Psoas muscle (tissue), 8 donors: ENCODE measurements at regions of chr1 and their contacts with region 1.

Region 1: DNA sequence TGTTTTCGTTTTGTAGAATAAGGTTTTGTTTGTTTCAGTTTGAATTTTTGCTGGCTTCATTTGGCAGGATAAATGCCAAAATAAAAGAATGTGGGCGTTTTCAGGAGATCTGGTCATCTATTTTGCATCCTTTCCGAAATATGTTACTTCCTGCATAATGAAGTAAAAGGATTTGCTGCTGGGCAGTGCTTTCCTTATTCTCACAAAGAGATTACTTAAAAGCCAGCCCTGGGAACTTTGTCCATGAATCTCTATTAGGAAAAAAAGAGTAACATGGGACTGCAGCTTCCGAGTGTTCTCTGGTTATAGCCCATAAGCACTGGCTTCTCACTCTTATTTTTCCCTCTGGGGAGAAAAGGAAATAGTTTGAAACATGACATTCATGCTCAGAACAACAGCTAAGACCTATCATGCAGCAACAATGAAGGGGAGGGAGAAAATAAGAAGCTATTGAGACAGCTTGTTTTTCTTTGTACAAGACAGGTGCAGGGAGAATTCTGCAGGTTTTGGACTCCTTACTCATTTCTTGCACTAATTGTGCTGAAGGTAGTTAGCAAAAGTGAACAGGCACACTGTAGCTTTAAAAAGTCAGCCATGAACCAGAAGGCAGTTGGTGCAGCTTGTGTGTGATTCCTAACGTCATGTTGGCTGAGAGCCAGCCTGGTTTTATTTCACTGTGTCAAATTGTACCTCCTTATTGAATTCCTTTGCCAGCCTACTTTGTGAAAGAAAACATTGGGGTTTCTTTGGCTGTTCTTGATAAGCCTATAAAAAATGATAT is at the start of gene SAMD13:
- DNase-seq: peak; percentile 50 to 65
- ATAC-seq: peak; percentile 48 to 66 (median 58)
- H3K4me3 ChIP-seq: peak within 1 kb of the TSS; percentile 96
- H3K27ac ChIP-seq: peak within 1 kb of the TSS; percentile 95
- H3K4me1 ChIP-seq: peaks cover 31% of the 10 kb centered on the region
- H3K27me3 ChIP-seq: no peaks in the 10 kb centered on the region
- CTCF ChIP-seq: no peak
- total RNA-seq, gene SAMD13: 0.65 to 3.2 (median 1.3) TPM

Region 2: GRCh38 chr1:84344286-84344685 is 43.1 kb after region 1 on chr1:
- intact Hi-C with region 1: no loop called
- DNase-seq: no peak
- ATAC-seq: no peak
- H3K4me3 ChIP-seq: no peak overlapping the region
- H3K27ac ChIP-seq: no peak overlapping the region
- H3K4me1 ChIP-seq: peaks cover 12% of the 10 kb centered on the region
- H3K27me3 ChIP-seq: no peaks in the 10 kb centered on the region
- CTCF ChIP-seq: no peak

Region 3: DNA sequence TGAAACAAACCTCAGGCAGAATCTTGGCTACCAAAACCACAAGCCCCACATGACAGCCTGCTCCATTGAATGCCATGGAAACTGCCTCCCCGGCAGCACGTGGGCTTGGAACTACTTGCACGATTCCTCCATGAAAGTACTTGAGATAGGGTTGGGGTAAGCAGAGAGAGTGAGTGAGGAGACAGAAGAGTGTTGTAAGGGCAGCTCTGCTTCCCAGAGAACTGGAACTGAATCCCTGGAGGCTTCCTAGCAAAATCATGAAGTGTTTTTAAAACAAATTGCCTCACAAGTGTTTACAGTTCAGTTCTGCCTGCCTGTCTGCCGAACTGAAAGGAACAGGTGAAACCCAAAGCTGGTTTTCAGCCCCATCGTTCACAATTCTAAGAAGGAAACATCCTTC is 61.8 kb after region 1 on chr1:
- intact Hi-C with region 1: loop called in 1 of 2 experiments (anchors 5 kb)
- DNase-seq: no peak
- ATAC-seq: peak; percentile 42 to 79 (median 56)
- H3K4me3 ChIP-seq: peak overlapping the region; percentile 48
- H3K27ac ChIP-seq: peak overlapping the region; percentile 64
- H3K4me1 ChIP-seq: peaks cover 14% of the 10 kb centered on the region
- H3K27me3 ChIP-seq: no peaks in the 10 kb centered on the region
- CTCF ChIP-seq: no peak

Region 4: GRCh38 chr1:84377480-84378095 is 76.4 kb after region 1 on chr1:
- intact Hi-C with region 1: loop called in 1 of 2 experiments (anchors 10 kb)
- DNase-seq: no peak
- ATAC-seq: peak in 2 of 4 donors; percentile 30 to 41
- H3K4me3 ChIP-seq: no peak overlapping the region
- H3K27ac ChIP-seq: no peak overlapping the region
- H3K4me1 ChIP-seq: peaks cover 32% of the 10 kb centered on the region
- H3K27me3 ChIP-seq: no peaks in the 10 kb centered on the region
- CTCF ChIP-seq: no peak